ENCODE measurements at regions of chr3 and their contacts with region 1.

Region 1: DNA sequence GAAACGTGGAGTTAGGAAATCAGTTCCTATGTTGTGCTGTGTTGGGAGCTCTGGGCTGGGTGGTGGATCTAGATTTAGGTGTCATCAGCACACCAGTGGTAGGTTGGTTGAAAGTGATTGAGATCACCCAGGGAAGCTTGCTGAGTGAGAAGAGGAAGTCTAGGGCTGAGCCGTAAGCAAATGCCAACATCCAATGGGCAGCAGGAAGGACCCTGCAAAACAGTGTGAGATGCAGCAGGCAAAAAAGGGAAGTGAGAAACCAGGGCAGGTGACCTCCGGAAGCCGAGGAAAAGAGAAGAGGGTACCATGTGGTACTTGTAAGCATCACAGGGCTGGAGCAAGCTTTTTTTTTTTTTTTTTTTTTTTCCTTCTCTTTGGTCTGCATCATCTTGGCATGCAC is 15.9 kb upstream of the COPG1 start:
- DNase-seq: peak; percentile 95
- ATAC-seq: peak; percentile 94
- H3K4me3 ChIP-seq: no peak overlapping the region
- H3K4me3 Mint-ChIP-seq: peak overlapping the region; percentile 50
- H3K27ac ChIP-seq: peak overlapping the region; percentile 71 to 87
- H3K27ac Mint-ChIP-seq: peak overlapping the region; percentile 97
- H3K4me1 ChIP-seq: peaks cover 28 to 36% of the 10 kb centered on the region in 2 donors
- H3K4me1 Mint-ChIP-seq: peaks cover 47% of the 10 kb centered on the region
- H3K27me3 ChIP-seq: no peaks in the 10 kb centered on the region
- H3K27me3 Mint-ChIP-seq: no peaks in the 10 kb centered on the region
- CTCF ChIP-seq: no peak

Region 2: DNA sequence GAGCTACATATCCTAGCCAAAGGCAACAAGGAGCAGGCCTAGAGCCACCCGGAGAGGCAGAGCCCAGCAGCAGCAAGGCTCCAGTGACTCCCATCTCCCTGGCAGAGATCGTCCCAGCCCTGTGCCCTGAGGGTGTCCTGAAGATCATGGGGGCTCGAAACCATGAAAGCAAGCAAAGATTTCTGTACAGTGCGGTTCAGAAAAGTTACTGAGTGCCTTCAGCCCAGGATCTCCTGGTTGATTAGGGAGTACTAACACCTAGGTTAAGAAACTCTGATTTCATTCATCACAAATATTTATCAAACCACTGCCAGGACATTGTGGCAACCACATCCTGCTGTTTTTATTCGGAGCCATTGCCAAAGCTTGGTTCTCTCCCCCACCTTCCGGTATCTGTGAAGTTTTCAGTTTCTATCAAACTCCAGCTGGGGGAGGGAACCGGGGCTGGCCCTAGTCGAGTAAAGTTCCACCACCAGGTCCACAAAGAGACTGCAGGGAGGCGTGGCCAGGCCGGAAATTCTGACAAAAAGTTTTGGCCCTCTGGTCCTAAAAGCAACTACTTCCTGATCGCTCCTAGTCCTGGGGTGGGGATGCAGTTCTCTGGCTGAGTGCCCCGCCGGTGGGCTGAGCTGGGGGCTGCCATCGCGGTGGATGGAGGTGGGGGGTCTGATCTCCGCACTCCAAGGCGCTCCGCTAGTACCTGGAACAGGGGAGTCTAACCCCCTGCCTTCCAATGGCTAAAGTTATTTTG is 113.1 kb before region 1 on chr3:
- CTCF ChIA-PET with region 1: interaction called, 4 read pairs
- POLR2A ChIA-PET with region 1: interaction called, 6 read pairs
- intact Hi-C with region 1: loop called (anchors 1 kb)
- DNase-seq: peak; percentile 93
- ATAC-seq: peak; percentile 61
- H3K4me3 ChIP-seq: peak overlapping the region; percentile 68 to 81 (median 76)
- H3K4me3 Mint-ChIP-seq: peak overlapping the region; percentile 88
- H3K27ac ChIP-seq: peak overlapping the region; percentile 61 to 62
- H3K27ac Mint-ChIP-seq: peak overlapping the region; percentile 84
- H3K4me1 ChIP-seq: peaks cover 42 to 46% of the 10 kb centered on the region in 2 donors
- H3K4me1 Mint-ChIP-seq: peaks cover 53% of the 10 kb centered on the region
- H3K27me3 ChIP-seq: no peaks in the 10 kb centered on the region
- H3K27me3 Mint-ChIP-seq: no peaks in the 10 kb centered on the region
- CTCF ChIP-seq: peak; percentile 30